ENCODE measurements at regions of chr6 and their contacts with region 1.

Region 1: DNA sequence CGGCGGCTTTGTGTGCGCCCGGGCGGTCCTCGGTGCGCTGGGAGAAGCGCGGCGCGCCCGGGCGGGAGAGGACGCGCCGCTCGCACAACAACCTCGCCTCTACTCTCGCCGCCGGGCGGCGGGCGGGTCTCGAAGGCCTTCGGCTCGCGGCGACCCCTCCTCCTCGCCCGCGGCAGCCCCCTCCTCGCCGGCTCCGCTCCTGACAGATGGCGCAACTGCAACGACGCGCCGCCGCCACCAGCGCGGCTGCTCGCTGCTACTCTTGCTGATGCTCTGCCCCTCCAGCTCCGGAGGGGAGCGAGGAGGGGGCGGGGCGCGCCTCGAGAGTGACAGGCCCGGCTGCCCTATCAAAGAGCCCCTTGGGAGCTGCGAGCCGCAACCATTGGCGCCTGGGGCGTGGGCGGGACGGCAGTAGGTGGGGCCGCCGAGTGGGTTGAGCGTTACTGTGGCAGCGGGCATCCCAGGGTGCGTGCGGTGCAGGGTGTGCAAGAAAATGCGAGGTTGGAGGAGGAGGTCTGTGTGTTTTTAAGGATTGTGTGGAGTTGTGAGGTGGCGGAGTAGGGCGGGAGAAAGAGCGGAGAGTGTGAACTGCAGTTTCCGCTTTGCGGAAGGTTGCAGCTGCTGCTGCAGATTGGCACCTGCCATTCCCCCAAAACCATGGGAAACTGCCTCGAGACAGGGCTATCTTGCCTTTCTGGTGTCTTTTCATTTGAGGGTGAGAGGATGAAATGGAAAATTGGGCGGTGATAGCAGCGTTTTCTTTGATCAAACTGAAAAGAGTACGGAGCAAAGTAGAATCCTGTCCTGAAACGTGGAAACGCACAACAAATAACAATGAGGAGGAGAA is at the start of gene FYN:
- DNase-seq: peak; percentile 98
- ATAC-seq: peak; percentile 100
- H3K4me3 ChIP-seq: peak within 1 kb of the TSS; percentile 72
- H3K27ac ChIP-seq: peak within 1 kb of the TSS; percentile 62
- H3K4me1 ChIP-seq: no peaks in the 10 kb centered on the region
- H3K27me3 ChIP-seq: peaks cover 0 to 31% (median 8%) of the 10 kb centered on the region in 3 donors
- CTCF ChIP-seq: peak; percentile 37
- total RNA-seq, gene FYN: 9.5 to 27.8 (median 15.0) TPM

Region 2: DNA sequence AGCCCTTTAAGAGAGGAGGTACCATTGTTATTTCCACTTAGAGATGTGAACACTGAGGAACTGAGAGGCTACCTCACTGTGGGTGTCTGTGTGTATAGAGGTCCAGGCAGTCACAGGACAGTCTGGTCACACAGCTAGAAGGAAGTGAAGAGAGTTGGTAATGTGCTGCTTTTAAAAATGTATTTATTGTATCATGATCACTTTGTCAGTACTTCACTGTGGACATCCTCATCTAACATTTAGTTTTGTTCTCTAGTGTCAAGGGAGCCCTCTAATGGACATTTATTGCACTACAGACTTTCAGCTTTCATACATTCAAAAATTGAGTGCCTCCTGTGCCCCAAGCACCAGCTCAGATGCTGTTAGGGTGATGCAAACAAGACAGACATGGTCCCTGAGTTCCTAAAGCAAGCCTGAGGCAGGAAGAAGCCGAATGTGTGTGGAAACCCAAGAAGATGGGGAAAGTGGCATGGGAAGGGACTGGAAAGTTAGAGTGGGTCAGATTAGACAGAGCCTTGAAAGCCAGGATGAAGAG is 663.1 kb before region 1 on chr6:
- intact Hi-C with region 1: no loop called
- DNase-seq: no peak
- ATAC-seq: peak; percentile 56 to 78 (median 70)
- H3K4me3 ChIP-seq: no peak overlapping the region
- H3K27ac ChIP-seq: peak overlapping the region; percentile 70
- H3K4me1 ChIP-seq: peaks cover 28% of the 10 kb centered on the region
- H3K27me3 ChIP-seq: no peaks in the 10 kb centered on the region
- CTCF ChIP-seq: peak; percentile 72

Region 3: GRCh38 chr6:111614833-111615582 is 258.4 kb before region 1 on chr6:
- intact Hi-C with region 1: no loop called
- DNase-seq: no peak
- ATAC-seq: peak in 3 of 4 donors; percentile 57 to 63 (median 58)
- H3K4me3 ChIP-seq: no peak overlapping the region
- H3K27ac ChIP-seq: no peak overlapping the region
- H3K4me1 ChIP-seq: peaks cover 12% of the 10 kb centered on the region
- H3K27me3 ChIP-seq: no peaks in the 10 kb centered on the region
- CTCF ChIP-seq: no peak

Region 4: DNA sequence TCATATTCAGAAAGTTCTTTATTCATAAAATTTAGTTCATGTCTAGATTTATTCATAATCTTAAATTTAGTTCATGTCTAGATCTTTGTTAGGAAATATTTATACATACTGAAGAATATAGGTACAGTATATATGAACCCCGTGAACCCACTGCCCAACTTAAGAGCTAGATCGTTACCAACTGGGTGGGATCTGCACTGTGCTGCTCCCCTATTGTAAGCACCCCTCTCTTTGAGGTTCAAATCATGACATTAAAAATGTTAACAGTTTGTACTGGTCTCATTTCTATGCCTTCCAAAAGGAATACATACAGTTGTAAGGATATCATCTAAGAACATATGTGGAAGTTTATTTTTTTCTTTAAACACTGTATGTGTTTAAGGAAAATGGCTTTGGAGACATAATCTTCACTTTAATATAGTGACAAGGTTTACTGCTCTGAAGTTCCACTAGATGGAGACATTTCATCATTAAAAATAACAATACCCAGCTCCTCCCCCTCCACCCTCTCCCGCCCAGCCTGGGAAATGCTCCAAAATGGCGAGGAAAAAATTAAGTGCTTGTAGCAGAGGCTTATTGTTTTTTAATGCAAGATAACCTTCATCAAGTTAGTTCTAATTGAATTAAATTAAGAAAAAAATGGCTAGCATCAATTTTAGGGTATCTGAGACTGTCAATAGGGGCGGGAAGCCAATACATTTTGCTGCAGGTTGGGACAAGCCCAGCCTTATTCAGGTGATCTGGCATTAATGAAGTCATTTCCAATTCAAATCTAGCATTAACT is 163.6 kb before region 1 on chr6:
- intact Hi-C with region 1: loop called in 1 of 2 experiments (anchors 5 kb)
- DNase-seq: peak; percentile 35 to 73
- ATAC-seq: peak; percentile 65 to 88 (median 76)
- H3K4me3 ChIP-seq: peak overlapping the region; percentile 61
- H3K27ac ChIP-seq: no peak overlapping the region
- H3K4me1 ChIP-seq: peaks cover 26% of the 10 kb centered on the region
- H3K27me3 ChIP-seq: no peaks in the 10 kb centered on the region
- CTCF ChIP-seq: peak; percentile 84

Region 5: DNA sequence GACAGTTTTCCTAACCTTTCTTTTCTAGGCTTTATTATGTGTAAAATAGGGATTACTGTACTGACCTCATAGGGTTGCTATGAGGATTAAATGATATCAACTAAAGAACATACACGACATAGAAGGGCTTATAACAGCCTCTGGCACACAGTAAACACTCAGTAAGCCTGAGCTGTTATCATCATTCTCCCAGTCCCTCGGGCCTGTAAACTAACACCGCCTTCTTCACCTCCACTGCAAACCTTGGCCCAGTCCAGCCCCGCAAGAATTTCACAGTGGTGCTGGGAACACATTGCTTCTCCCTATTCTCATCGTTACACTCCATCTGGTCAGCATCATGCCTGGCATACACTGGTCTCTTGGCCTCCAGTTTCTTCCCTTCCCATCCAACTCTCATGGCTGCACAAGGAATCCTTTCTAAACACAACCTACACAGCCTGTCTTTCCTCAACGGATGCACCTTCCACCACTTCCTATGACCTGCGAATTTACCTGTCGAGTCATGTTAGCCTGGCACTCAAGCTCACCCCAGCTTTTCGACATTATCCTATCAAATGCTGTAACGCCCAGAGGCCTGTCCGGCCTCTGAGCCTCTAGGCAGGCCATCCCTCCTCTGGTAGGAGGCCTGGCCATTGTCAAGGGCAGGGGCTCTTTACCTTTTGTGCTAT is 92.2 kb before region 1 on chr6:
- intact Hi-C with region 1: loop called in 1 of 2 experiments (anchors 5 kb)
- DNase-seq: no peak
- ATAC-seq: peak; percentile 62 to 83 (median 72)
- H3K4me3 ChIP-seq: no peak overlapping the region
- H3K27ac ChIP-seq: no peak overlapping the region
- H3K4me1 ChIP-seq: peaks cover 11% of the 10 kb centered on the region
- H3K27me3 ChIP-seq: peaks cover 0 to 2% (median 0%) of the 10 kb centered on the region in 3 donors
- CTCF ChIP-seq: no peak

Region 6: GRCh38 chr6:111804627-111805235 is 68.7 kb before region 1 on chr6:
- intact Hi-C with region 1: loop called in 1 of 2 experiments (anchors 5 kb)
- DNase-seq: no peak
- ATAC-seq: peak in 3 of 4 donors; percentile 47 to 54 (median 50)
- H3K4me3 ChIP-seq: no peak overlapping the region
- H3K27ac ChIP-seq: no peak overlapping the region
- H3K4me1 ChIP-seq: no peaks in the 10 kb centered on the region
- H3K27me3 ChIP-seq: no peaks in the 10 kb centered on the region
- CTCF ChIP-seq: no peak

Region 7: GRCh38 chr6:111997078-111997852 is 123.9 kb after region 1 on chr6:
- intact Hi-C with region 1: loop called (anchors 5 to 10 kb)
- DNase-seq: peak; percentile 78 to 88
- ATAC-seq: peak; percentile 91 to 96 (median 94)
- H3K4me3 ChIP-seq: peak overlapping the region; percentile 43
- H3K27ac ChIP-seq: no peak overlapping the region
- H3K4me1 ChIP-seq: peaks cover 4% of the 10 kb centered on the region
- H3K27me3 ChIP-seq: no peaks in the 10 kb centered on the region
- CTCF ChIP-seq: peak; percentile 92